ENCODE measurements at regions of chr5 and their contacts with region 1.

Region 1: GRCh38 chr5:168401907-168402306 is 84.4 kb upstream of the RARS1 start:
- DNase-seq: no peak
- H3K4me3 ChIP-seq: no peak overlapping the region
- H3K4me3 Mint-ChIP-seq: no peak overlapping the region
- H3K27ac ChIP-seq: no peak overlapping the region
- H3K27ac Mint-ChIP-seq: no peak overlapping the region
- H3K4me1 ChIP-seq: no peaks in the 10 kb centered on the region
- H3K4me1 Mint-ChIP-seq: no peaks in the 10 kb centered on the region
- H3K27me3 ChIP-seq: no peaks in the 10 kb centered on the region
- H3K27me3 Mint-ChIP-seq: peaks cover 0 to 11% of the 10 kb centered on the region in 2 donors

Region 2: DNA sequence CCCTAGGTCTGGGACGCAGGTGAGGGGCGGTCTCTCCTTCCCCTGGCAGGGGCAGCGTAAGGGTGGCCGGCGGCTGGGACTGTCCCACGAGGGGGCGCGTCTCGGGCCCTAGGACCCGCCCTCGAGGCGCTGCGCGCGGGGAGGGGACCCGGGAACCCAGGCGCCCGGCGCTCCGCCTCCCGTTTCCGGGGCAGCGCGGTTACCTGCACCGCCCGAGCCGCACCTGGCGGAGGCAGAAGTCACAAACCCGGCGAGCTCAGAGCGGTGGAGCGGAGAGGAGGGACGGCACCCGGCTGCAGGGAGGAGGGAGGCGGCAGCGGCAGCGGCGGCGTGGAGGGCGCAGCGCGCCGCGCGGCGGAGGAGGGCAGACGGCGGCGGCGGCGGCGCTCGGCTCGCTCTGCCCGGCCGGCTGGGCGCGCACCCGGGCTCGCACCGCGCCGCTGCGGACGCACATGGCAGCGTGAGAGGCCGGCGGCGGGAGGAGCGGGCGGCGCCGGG is 110.4 kb before region 1 on chr5 and contains the start of gene WWC1:
- CTCF ChIA-PET with region 1: no interaction called
- POLR2A ChIA-PET with region 1: interaction called, 14 read pairs
- DNase-seq: peak; percentile 30 to 63 (median 40)
- H3K4me3 ChIP-seq: no peak within 1 kb of the TSS
- H3K4me3 Mint-ChIP-seq: peak within 1 kb of the TSS; percentile 61 to 82 (median 71)
- H3K27ac ChIP-seq: no peak within 1 kb of the TSS
- H3K27ac Mint-ChIP-seq: peak within 1 kb of the TSS in 2 of 8 donors; percentile 43 to 66
- H3K4me1 ChIP-seq: no peaks in the 10 kb centered on the region
- H3K4me1 Mint-ChIP-seq: peaks cover 7 to 19% (median 16%) of the 10 kb centered on the region in 3 donors
- H3K27me3 ChIP-seq: peaks cover 20% of the 10 kb centered on the region
- H3K27me3 Mint-ChIP-seq: peaks cover 24 to 51% of the 10 kb centered on the region in 2 donors
- total RNA-seq, gene WWC1: 0.77 to 1.8 TPM